ENCODE measurements at regions of chr11 and their contacts with region 1.

Region 1: DNA sequence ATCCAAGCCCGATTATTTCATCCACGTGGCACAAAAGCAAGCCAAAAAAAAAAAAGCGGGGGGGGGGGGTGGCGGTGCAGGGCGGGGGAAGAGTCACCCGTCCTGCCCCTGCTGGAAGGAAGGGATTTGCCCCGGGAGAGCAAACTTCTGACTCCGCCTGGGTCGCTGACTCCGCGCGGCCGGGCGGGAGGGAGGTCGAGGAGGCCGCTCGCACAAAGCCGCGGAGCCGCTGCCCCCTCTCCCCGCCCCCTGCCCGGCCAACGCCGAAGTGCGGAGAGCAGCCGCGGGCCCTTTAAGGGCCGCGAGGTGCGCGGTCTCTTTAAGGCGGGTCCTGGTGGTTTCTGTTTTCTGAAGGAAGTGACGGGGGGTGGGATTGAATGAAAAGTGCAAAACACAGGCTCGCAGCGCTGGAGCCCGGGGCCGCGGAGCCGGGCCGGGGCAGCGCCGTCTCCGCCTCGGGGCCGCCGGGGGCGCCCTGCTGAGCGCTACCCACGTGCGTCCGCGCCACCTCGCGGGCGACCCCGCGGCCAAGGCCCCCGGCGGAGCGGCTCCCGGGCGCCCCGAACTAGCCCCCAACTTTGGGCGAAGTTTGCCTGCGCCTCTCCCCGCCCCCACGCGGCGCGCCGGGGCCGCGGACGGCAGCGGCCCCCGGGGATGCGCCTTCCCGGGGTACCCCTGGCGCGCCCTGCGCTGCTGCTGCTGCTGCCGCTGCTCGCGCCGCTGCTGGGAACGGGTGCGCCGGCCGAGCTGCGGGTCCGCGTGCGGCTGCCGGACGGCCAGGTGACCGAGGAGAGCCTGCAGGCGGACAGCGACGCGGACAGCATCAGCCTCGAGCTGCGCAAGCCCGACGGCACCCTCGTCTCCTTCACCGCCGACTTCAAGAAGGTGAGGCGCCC is at the start of gene OAF:
- DNase-seq: peak; percentile 84
- H3K4me3 ChIP-seq: peak within 1 kb of the TSS; percentile 37 to 67 (median 60)
- H3K27ac ChIP-seq: peak within 1 kb of the TSS; percentile 47
- H3K4me1 ChIP-seq: peaks cover 40% of the 10 kb centered on the region
- H3K27me3 ChIP-seq: no peaks in the 10 kb centered on the region
- CTCF ChIP-seq: peak in 1 of 2 donors; percentile 13
- POLR2A ChIP-seq: peak; percentile 86
- total RNA-seq, gene OAF: 26.7 and 32.1 TPM in 2 replicates

Region 2: DNA sequence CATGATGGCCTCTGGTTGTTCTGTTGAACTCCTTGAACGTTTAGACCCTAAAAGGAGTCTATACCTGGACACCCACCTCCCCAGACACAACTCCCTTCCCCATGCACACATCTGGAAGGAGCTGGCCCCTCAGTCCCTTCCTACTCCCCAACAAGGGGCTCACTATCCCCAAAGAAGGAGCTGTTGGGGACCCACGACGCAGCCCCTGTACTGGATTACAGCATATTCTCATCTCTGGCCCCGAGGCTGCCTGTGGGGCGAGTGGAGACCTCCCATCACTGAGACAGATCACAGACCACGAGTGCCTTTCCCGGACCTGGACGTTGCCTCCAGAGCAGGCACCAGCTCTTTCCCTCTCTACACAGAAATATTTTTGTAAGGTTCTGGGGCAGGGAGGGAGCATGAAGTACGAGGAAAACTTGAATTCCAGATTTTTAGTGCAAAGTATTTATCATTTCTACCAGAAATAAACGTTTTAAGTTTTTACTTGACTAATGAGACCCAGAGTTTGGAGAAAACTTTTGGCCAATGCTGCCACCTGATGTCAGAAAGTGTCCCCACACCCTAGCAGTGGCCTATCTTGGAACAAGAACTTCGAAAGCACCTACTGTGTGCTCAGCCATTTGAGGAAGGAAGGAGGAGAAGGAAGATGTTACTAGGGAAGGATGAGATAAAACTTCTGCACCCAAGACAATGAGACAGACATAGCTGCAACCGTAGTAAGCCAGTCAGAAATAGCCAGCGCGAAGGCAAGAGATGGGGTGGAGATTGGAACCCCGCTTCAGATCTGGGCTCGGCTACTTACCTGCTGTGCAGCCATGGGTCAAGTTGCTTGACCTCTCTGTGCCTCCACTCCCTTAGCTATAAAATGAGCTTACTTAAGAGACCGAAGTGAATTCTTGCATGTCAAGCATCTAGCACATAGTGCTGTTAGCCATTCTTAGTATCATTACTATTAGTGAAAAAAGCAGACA is 18.9 kb after region 1 on chr11:
- CTCF ChIA-PET with region 1: interaction called, 10 read pairs
- POLR2A ChIA-PET with region 1: interaction called, 4 read pairs
- dilution Hi-C with region 1: no loop called
- intact Hi-C with region 1: loop called (anchors 1 kb)
- DNase-seq: peak; percentile 48
- H3K4me3 ChIP-seq: no peak overlapping the region
- H3K27ac ChIP-seq: no peak overlapping the region
- H3K4me1 ChIP-seq: peaks cover 11% of the 10 kb centered on the region
- H3K27me3 ChIP-seq: peaks cover 1 to 7% of the 10 kb centered on the region in 2 experiments
- CTCF ChIP-seq: peak; percentile 49 to 63
- POLR2A ChIP-seq: no peak

Region 3: GRCh38 chr11:120441592-120441991 is 230.7 kb after region 1 on chr11:
- CTCF ChIA-PET with region 1: no interaction called
- POLR2A ChIA-PET with region 1: no interaction called
- dilution Hi-C with region 1: no loop called
- intact Hi-C with region 1: no loop called
- DNase-seq: no peak
- H3K4me3 ChIP-seq: no peak overlapping the region
- H3K27ac ChIP-seq: no peak overlapping the region
- H3K4me1 ChIP-seq: no peaks in the 10 kb centered on the region
- H3K27me3 ChIP-seq: no peaks in the 10 kb centered on the region
- CTCF ChIP-seq: no peak
- POLR2A ChIP-seq: no peak

Region 4: GRCh38 chr11:120773501-120774031 is 562.7 kb after region 1 on chr11:
- CTCF ChIA-PET with region 1: no interaction called
- POLR2A ChIA-PET with region 1: no interaction called
- dilution Hi-C with region 1: no loop called
- intact Hi-C with region 1: loop called (anchors 10 kb)
- DNase-seq: peak; percentile 61
- H3K4me3 ChIP-seq: no peak overlapping the region
- H3K27ac ChIP-seq: peak overlapping the region; percentile 65
- H3K4me1 ChIP-seq: peaks cover 21% of the 10 kb centered on the region
- H3K27me3 ChIP-seq: no peaks in the 10 kb centered on the region
- CTCF ChIP-seq: no peak
- POLR2A ChIP-seq: no peak

Region 5: GRCh38 chr11:120853435-120853834 is 642.6 kb after region 1 on chr11:
- CTCF ChIA-PET with region 1: no interaction called
- POLR2A ChIA-PET with region 1: no interaction called
- dilution Hi-C with region 1: no loop called
- intact Hi-C with region 1: no loop called
- DNase-seq: no peak
- H3K4me3 ChIP-seq: no peak overlapping the region
- H3K27ac ChIP-seq: no peak overlapping the region
- H3K4me1 ChIP-seq: no peaks in the 10 kb centered on the region
- H3K27me3 ChIP-seq: no peaks in the 10 kb centered on the region
- CTCF ChIP-seq: no peak
- POLR2A ChIP-seq: no peak